ENCODE measurements at regions of chr2 and their contacts with region 1.

Region 1: GRCh38 chr2:230924470-230925341 is at the start of gene GPR55:
- DNase-seq: peak; percentile 72
- ATAC-seq: peak; percentile 94
- H3K4me3 Mint-ChIP-seq: no peak within 1 kb of the TSS
- H3K27ac Mint-ChIP-seq: no peak within 1 kb of the TSS
- H3K4me1 Mint-ChIP-seq: peaks cover 9% of the 10 kb centered on the region
- H3K27me3 Mint-ChIP-seq: no peaks in the 10 kb centered on the region
- CTCF ChIP-seq: peak; percentile 55
- total RNA-seq, gene GPR55: not detected in 3 replicates

Region 2: GRCh38 chr2:230830428-230830827 is 94.3 kb before region 1 on chr2:
- CTCF ChIA-PET with region 1: interaction called, 30 read pairs
- POLR2A ChIA-PET with region 1: no interaction called
- DNase-seq: no peak
- ATAC-seq: no peak
- H3K4me3 Mint-ChIP-seq: no peak overlapping the region
- H3K27ac Mint-ChIP-seq: no peak overlapping the region
- H3K4me1 Mint-ChIP-seq: no peaks in the 10 kb centered on the region
- H3K27me3 Mint-ChIP-seq: peaks cover 5% of the 10 kb centered on the region; the same call in 1 of the 2 replicates
- CTCF ChIP-seq: no peak

Region 3: DNA sequence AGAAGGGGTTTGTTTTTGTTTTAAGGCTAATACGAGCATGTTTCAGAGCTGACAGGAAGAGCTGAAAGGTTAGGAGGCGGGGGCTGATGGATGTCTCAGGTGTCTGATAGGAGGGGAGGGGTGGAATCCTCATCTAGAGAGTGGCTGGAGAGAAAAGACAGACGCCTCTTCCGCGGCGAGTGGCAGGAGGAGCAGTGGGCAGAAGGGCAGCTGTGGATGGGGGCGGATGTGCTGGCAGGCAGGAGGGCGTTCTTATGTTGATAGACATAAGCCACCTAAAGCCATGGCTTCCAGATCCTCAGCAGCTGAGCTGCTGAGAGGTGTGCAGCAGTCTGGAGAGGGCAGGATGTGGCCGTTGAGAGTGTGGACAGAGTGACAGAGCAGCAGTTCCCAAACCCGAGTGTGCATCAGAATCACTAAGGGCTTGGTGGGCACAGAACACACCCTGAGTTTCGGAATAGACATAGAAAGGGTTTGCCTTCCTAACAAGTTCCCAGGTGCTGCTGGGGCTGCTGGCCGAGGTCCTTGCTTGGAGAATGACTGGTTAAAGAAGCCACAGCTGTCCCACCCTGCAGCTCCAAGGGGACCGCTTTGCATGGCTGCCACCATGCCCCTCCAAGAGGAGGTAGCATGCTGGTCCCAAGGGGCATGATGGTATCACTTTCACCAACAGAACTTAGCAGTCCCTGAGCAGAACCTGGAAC is 63.0 kb before region 1 on chr2:
- CTCF ChIA-PET with region 1: interaction called, 11 read pairs
- POLR2A ChIA-PET with region 1: no interaction called
- DNase-seq: peak; percentile 56
- ATAC-seq: peak; percentile 73
- H3K4me3 Mint-ChIP-seq: peak overlapping the region; percentile 5
- H3K27ac Mint-ChIP-seq: peak overlapping the region; percentile 17
- H3K4me1 Mint-ChIP-seq: peaks cover 42% of the 10 kb centered on the region
- H3K27me3 Mint-ChIP-seq: no peaks in the 10 kb centered on the region; the same call in 1 of the 2 replicates
- CTCF ChIP-seq: no peak

Region 4: DNA sequence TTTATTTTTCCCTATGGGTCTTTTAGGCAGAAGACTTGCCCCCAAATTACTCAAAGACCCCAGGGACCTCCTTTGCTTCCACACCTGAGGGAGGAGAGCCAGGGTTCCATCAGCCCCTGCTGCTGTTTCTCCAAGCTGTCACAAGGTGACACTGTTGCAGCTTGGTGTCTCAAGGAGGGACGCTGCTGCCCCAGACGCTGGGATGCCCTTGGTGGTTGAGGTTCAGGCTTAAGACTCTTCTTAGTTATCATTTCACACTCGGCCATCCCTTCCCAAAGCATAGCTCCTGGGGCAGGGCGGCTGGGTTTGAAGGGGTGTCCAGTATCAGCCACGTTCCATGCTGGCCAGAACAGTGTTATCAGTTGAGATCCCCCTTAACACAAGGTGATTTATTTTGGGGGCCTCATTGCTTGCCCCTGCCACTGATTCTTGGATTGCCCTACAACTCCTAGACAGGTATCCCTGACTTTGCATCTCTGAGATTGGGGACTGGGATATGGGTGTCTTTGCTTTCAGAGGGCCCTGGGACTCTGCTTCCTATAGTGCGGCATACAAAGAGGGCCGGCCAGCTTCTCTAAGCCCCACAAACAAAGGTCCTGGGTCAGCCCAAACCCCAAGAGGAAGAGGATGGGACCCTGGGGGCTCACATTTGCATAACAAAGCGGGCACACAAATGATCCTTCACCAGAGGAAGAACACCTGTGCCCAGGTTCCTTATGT is 22.4 kb before region 1 on chr2:
- CTCF ChIA-PET with region 1: interaction called, 26 read pairs
- POLR2A ChIA-PET with region 1: no interaction called
- DNase-seq: peak; percentile 78
- ATAC-seq: peak; percentile 83
- H3K4me3 Mint-ChIP-seq: peak overlapping the region; percentile 42
- H3K27ac Mint-ChIP-seq: peak overlapping the region; percentile 71
- H3K4me1 Mint-ChIP-seq: peaks cover 60% of the 10 kb centered on the region
- H3K27me3 Mint-ChIP-seq: peaks cover 26% of the 10 kb centered on the region
- CTCF ChIP-seq: peak; percentile 71

Region 5: DNA sequence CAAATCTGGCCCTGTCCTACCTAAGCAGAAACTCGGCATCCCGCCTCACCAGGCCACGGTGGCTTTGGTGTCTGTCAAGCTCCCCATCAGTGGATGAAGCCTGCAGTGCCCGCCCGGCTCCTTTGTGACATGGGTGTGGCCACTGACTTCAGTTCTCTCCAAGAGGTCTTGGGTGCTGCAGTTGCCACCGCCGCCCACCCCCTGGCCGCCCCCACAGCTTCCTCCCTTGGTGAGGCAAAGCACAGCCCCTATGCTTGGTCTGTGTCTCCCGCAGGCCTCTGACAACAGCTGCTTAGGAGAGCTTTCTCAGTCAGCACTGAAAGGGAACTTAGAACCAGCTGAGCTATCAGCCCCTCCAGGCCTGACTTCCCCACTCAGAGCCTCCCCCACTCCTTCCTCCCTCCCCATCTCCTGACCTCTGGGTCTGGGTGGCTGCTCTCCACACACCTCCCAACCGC is 23.2 kb after region 1 on chr2:
- CTCF ChIA-PET with region 1: interaction called, 21 read pairs
- POLR2A ChIA-PET with region 1: no interaction called
- DNase-seq: no peak
- ATAC-seq: no peak
- H3K4me3 Mint-ChIP-seq: no peak overlapping the region
- H3K27ac Mint-ChIP-seq: no peak overlapping the region
- H3K4me1 Mint-ChIP-seq: 0 out of 2 replicates have a peak, but pooled peaks cover 3% of the 10 kb centered on the region
- H3K27me3 Mint-ChIP-seq: no peaks in the 10 kb centered on the region
- CTCF ChIP-seq: no peak

Region 6: GRCh38 chr2:231000211-231000904 is 75.7 kb after region 1 on chr2:
- CTCF ChIA-PET with region 1: interaction called, 10 read pairs
- POLR2A ChIA-PET with region 1: no interaction called
- DNase-seq: peak; percentile 72
- ATAC-seq: peak; percentile 97
- H3K4me3 Mint-ChIP-seq: no peak overlapping the region
- H3K27ac Mint-ChIP-seq: no peak overlapping the region
- H3K4me1 Mint-ChIP-seq: peaks cover 8% of the 10 kb centered on the region; the same call in 1 of the 2 replicates
- H3K27me3 Mint-ChIP-seq: peaks cover 18% of the 10 kb centered on the region
- CTCF ChIP-seq: no peak

Region 7: GRCh38 chr2:231463698-231464575 is 539.2 kb after region 1 on chr2 and contains the start of gene NCL:
- CTCF ChIA-PET with region 1: no interaction called
- POLR2A ChIA-PET with region 1: no interaction called
- DNase-seq: peak; percentile 84
- ATAC-seq: peak; percentile 94
- H3K4me3 Mint-ChIP-seq: peak within 1 kb of the TSS; percentile 98
- H3K27ac Mint-ChIP-seq: peak within 1 kb of the TSS; percentile 99
- H3K4me1 Mint-ChIP-seq: peaks cover 36% of the 10 kb centered on the region
- H3K27me3 Mint-ChIP-seq: 0 out of 2 replicates have a peak, but pooled peaks cover 3% of the 10 kb centered on the region
- CTCF ChIP-seq: no peak
- total RNA-seq, gene NCL: 944 to 1,223 TPM (median 1,004 TPM) in 3 replicates